AG04449 (cell line): ENCODE measurements at regions of chr4 and their contacts with region 1.

Region 1: GRCh38 chr4:133157460-133158160 is 8.5 kb downstream of the PCDH10 start:
- DNase-seq: no peak
- H3K4me3 ChIP-seq: no peak overlapping the region
- CTCF ChIP-seq: no peak

Region 2: GRCh38 chr4:133146574-133147241 is 10.9 kb before region 1 on chr4:
- CTCF ChIA-PET with region 1: interaction called, 19 read pairs
- POLR2A ChIA-PET with region 1: no interaction called
- DNase-seq: no peak
- H3K4me3 ChIP-seq: peak overlapping the region; percentile 50
- CTCF ChIP-seq: peak; percentile 78

Region 3: GRCh38 chr4:133270021-133270570 is 112.5 kb after region 1 on chr4:
- CTCF ChIA-PET with region 1: no interaction called
- POLR2A ChIA-PET with region 1: no interaction called
- DNase-seq: no peak
- H3K4me3 ChIP-seq: no peak overlapping the region
- CTCF ChIP-seq: no peak